ENCODE measurements at regions of chr5 and their contacts with region 1.

Region 1: GRCh38 chr5:54646356-54647101 is 129.0 kb downstream of the SNX18 start:
- DNase-seq: peak; percentile 33 to 90 (median 69)
- ATAC-seq: peak; percentile 78
- H3K4me3 ChIP-seq: peak overlapping the region; percentile 12 to 21
- H3K4me3 Mint-ChIP-seq: peak overlapping the region; percentile 71
- H3K27ac ChIP-seq: peak overlapping the region; percentile 42 to 70
- H3K27ac Mint-ChIP-seq: peak overlapping the region; percentile 95
- H3K4me1 ChIP-seq: peaks cover 49% of the 10 kb centered on the region
- H3K4me1 Mint-ChIP-seq: peaks cover 59% of the 10 kb centered on the region
- H3K27me3 ChIP-seq: no peaks in the 10 kb centered on the region
- H3K27me3 Mint-ChIP-seq: no peaks in the 10 kb centered on the region
- CTCF ChIP-seq: no peak

Region 2: GRCh38 chr5:54610197-54610944 is 36.2 kb before region 1 on chr5:
- CTCF ChIA-PET with region 1: interaction called, 4 read pairs
- POLR2A ChIA-PET with region 1: interaction called, 16 read pairs
- intact Hi-C with region 1: loop called (anchors 1 to 2 kb)
- DNase-seq: peak in 7 of 9 experiments; percentile 8 to 81 (median 34)
- ATAC-seq: peak; percentile 88
- H3K4me3 ChIP-seq: peak overlapping the region in 1 of 2 experiments; percentile 1
- H3K4me3 Mint-ChIP-seq: peak overlapping the region; percentile 44
- H3K27ac ChIP-seq: peak overlapping the region in 1 of 2 experiments; percentile 14
- H3K27ac Mint-ChIP-seq: peak overlapping the region; percentile 61
- H3K4me1 ChIP-seq: peaks cover 21% of the 10 kb centered on the region
- H3K4me1 Mint-ChIP-seq: peaks cover 27% of the 10 kb centered on the region
- H3K27me3 ChIP-seq: no peaks in the 10 kb centered on the region
- H3K27me3 Mint-ChIP-seq: no peaks in the 10 kb centered on the region
- CTCF ChIP-seq: no peak

Region 3: GRCh38 chr5:54673523-54674225 is 27.1 kb after region 1 on chr5:
- CTCF ChIA-PET with region 1: no interaction called
- POLR2A ChIA-PET with region 1: interaction called, 3 read pairs
- intact Hi-C with region 1: loop called in 1 of 2 experiments (anchors 1 kb)
- DNase-seq: peak; percentile 17 to 76 (median 50)
- ATAC-seq: peak; percentile 87
- H3K4me3 ChIP-seq: no peak overlapping the region
- H3K4me3 Mint-ChIP-seq: no peak overlapping the region
- H3K27ac ChIP-seq: peak overlapping the region in 1 of 2 experiments; percentile 49
- H3K27ac Mint-ChIP-seq: peak overlapping the region; percentile 87
- H3K4me1 ChIP-seq: peaks cover 32% of the 10 kb centered on the region
- H3K4me1 Mint-ChIP-seq: peaks cover 53% of the 10 kb centered on the region
- H3K27me3 ChIP-seq: no peaks in the 10 kb centered on the region
- H3K27me3 Mint-ChIP-seq: no peaks in the 10 kb centered on the region
- CTCF ChIP-seq: no peak

Region 4: DNA sequence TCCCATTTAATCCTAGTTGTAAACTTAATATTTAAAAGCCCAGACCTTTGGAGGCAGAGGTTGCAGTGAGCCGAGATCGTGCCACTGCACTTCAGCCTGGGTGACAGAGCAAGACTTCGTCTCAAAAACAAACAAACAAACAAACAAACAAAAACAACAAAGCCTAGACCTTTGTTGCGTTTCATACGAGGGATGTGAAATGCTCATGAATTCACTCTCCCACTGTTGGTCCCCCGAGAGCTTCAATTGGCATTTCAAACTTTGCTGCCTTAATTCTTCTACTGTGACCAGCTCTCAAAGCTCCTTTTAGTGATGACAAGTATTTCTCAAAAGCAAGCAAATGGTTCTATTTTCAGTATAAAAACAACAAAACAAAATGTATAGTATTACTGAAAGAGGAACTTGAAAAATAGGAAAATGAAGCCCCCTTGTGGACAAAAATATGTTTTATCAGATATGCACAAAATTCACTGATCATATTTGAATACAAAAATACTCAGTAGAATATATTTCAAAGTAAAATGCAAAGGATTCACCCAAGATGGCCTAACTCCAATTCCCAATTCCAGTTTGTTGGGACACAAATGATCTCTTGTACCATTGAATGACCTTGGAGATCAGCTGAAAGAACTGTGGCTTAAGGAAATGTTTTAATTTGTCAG is 198.5 kb after region 1 on chr5:
- CTCF ChIA-PET with region 1: interaction called, 8 read pairs
- POLR2A ChIA-PET with region 1: interaction called, 4 read pairs
- intact Hi-C with region 1: loop called in 1 of 2 experiments (anchors 10 kb)
- DNase-seq: peak in 2 of 9 experiments; percentile 59 to 70
- ATAC-seq: no peak
- H3K4me3 ChIP-seq: no peak overlapping the region
- H3K4me3 Mint-ChIP-seq: peak overlapping the region; percentile 55
- H3K27ac ChIP-seq: no peak overlapping the region
- H3K27ac Mint-ChIP-seq: peak overlapping the region; percentile 15
- H3K4me1 ChIP-seq: peaks cover 3% of the 10 kb centered on the region
- H3K4me1 Mint-ChIP-seq: peaks cover 3% of the 10 kb centered on the region
- H3K27me3 ChIP-seq: no peaks in the 10 kb centered on the region
- H3K27me3 Mint-ChIP-seq: peaks cover 9% of the 10 kb centered on the region
- CTCF ChIP-seq: peak; percentile 78